ENCODE measurements at regions of chr4 and their contacts with region 1.

Region 1: GRCh38 chr4:155787113-155787710 is 28.4 kb downstream of the GUCY1B1 start:
- DNase-seq: peak in 1 of 2 donors; percentile 3
- H3K4me3 ChIP-seq: no peak overlapping the region
- H3K27ac ChIP-seq: no peak overlapping the region
- H3K4me1 ChIP-seq: no peaks in the 10 kb centered on the region
- H3K27me3 ChIP-seq: no peaks in the 10 kb centered on the region
- CTCF ChIP-seq: peak; percentile 32 to 98 (median 82)
- POLR2A ChIP-seq: no peak

Region 2: DNA sequence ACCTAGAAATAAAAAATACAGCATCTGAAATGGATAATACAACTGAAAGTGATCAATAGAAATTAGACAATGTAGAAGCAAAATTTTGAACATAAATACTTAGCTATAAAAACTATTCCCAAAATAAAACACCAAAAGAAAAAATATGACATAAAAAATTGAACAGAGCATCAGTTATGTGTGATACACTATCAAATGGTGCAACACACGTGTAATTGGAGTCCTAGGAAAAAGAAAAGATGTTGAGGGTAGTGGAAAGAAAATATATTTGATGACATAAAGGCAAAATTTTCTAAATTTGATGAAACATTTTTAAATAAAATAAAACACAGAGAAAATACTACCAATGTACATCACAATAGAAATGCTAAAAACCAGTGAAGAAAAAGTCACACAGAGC is 515.7 kb before region 1 on chr4:
- intact Hi-C with region 1: no loop called
- DNase-seq: no peak
- H3K4me3 ChIP-seq: no peak overlapping the region
- H3K27ac ChIP-seq: no peak overlapping the region
- H3K4me1 ChIP-seq: no peaks in the 10 kb centered on the region
- H3K27me3 ChIP-seq: no peaks in the 10 kb centered on the region
- CTCF ChIP-seq: no peak
- POLR2A ChIP-seq: no peak

Region 3: DNA sequence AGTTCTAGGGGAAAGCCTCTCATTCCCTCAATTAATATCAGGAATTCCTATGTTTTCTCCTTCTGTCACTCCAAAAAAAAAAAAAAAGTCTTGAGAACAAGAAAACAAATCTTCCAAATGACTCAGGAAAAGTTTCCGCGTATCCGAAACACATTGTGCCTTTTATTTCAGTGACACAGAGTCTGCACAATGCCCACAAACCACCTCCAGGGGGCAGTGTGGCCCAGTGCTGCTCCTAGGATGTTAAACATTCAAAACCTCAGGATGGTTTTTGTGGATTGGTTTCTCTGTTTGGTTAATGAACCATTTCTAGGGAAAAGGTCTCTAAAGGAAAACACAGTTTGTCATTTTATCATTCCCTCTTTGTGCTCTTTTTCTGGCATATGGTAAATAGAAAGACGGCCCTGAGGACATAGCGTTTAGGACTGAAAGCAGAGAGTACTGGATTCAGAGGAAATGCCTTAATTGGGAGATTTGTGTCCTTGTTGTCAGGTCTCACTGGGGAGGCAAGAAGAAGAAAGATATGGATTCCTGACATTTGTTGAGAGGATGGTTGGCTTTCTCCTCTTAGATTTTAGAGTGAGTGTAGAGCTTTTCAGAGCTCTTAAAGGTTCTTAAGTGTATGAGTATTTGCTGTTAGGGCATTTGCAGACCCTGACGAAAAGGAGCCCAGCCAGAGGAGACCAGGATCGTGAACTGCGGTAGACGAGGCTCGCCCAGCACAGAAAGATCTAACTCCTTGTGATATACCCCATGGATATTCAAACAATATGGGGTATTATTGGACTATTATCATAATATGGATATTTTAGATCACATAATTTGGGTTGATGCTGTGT is 344.7 kb before region 1 on chr4:
- intact Hi-C with region 1: loop called (anchors 5 kb)
- DNase-seq: peak; percentile 70 to 80
- H3K4me3 ChIP-seq: no peak overlapping the region
- H3K27ac ChIP-seq: no peak overlapping the region
- H3K4me1 ChIP-seq: no peaks in the 10 kb centered on the region
- H3K27me3 ChIP-seq: no peaks in the 10 kb centered on the region
- CTCF ChIP-seq: peak; percentile 79 to 94 (median 86)
- POLR2A ChIP-seq: no peak

Region 4: GRCh38 chr4:155529272-155529671 is 257.9 kb before region 1 on chr4:
- intact Hi-C with region 1: loop called (anchors 10 kb)
- DNase-seq: no peak
- H3K4me3 ChIP-seq: no peak overlapping the region
- H3K27ac ChIP-seq: no peak overlapping the region
- H3K4me1 ChIP-seq: no peaks in the 10 kb centered on the region
- H3K27me3 ChIP-seq: no peaks in the 10 kb centered on the region
- CTCF ChIP-seq: peak in 1 of 6 experiments; percentile 26
- POLR2A ChIP-seq: no peak

Region 5: DNA sequence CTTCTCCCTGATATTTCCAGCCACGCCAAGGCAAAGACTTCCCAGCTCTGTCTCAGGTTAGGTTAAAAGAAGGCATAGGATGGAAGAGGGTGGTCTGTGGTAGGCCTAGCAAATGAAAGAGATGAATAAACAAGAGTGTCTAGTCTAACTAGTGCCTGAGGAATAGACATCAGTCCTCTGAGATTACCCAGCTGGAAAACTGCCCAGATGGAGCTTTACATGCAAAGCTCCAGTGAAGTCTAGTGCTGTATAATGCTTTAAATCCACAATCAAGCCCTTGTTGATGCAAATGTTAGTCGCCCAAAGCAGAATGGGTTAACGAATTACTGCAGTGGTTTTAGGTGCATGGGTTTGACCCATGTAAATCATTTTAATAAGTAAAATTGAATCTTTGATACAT is 53.1 kb before region 1 on chr4:
- intact Hi-C with region 1: no loop called
- DNase-seq: no peak
- H3K4me3 ChIP-seq: no peak overlapping the region
- H3K27ac ChIP-seq: no peak overlapping the region
- H3K4me1 ChIP-seq: no peaks in the 10 kb centered on the region
- H3K27me3 ChIP-seq: no peaks in the 10 kb centered on the region
- CTCF ChIP-seq: no peak
- POLR2A ChIP-seq: no peak

Region 6: GRCh38 chr4:155995069-155995468 is 207.9 kb after region 1 on chr4:
- intact Hi-C with region 1: no loop called
- DNase-seq: no peak
- H3K4me3 ChIP-seq: no peak overlapping the region
- H3K27ac ChIP-seq: no peak overlapping the region
- H3K4me1 ChIP-seq: no peaks in the 10 kb centered on the region
- H3K27me3 ChIP-seq: no peaks in the 10 kb centered on the region
- CTCF ChIP-seq: no peak
- POLR2A ChIP-seq: no peak

Measured in thyroid gland (tissue), 4 donors.